H1 (cell line): ENCODE measurements at regions of chr14 and their contacts with region 1.

Region 1: DNA sequence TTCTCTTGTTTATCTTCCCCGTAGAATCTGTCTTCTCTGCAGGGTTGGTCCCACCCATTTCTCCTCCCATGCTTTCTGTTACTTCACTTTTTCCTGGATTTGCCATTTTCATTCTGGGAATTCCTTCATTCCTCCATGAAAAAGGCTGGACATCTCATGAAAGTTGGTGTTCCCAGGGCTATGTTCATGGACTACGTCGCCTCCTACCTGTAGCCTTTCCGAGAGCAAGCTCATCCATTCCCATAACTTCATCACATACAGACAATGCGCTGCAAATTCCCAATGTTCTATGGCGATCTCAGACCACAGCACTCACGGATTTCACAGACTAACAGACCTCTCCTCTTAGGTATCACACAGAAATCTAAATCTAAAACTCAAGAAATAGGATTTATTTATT is 217.1 kb downstream of the EXOC5 start:
- DNase-seq: no peak
- H3K4me3 ChIP-seq: no peak overlapping the region
- H3K27ac ChIP-seq: no peak overlapping the region
- H3K4me1 ChIP-seq: no peaks in the 10 kb centered on the region
- H3K27me3 ChIP-seq: peaks cover 0 to 3% (median 0%) of the 10 kb centered on the region in 4 experiments; a peak in 3 of 7 replicates
- CTCF ChIP-seq: peak; percentile 59 to 75 (median 61)
- EP300 ChIP-seq: no peak
- POLR2A ChIP-seq: no peak
- RAD21 ChIP-seq: peak; percentile 85

Region 2: DNA sequence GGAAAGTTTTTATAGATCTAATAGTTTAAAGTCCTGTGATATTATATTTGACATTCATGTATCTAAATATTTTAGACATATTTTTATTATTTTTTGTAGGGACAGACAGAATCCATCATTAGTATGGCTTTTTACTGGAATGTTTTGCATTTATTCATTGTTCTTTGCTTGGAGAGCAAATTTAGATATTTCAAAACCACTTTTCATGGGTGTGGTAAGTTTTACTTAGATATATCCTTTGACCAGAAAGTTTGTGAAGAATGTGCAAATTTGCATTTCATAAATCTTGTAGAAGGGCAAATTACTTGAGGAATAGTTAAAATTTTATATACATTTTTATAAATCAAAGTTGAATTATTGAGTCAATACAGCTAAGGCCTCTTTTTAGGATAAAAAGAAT is 434.5 kb before region 1 on chr14:
- CTCF ChIA-PET with region 1: no interaction called
- POLR2A ChIA-PET with region 1: no interaction called
- DNase-seq: no peak
- H3K4me3 ChIP-seq: no peak overlapping the region
- H3K27ac ChIP-seq: no peak overlapping the region
- H3K4me1 ChIP-seq: no peaks in the 10 kb centered on the region
- H3K27me3 ChIP-seq: peaks cover 0 to 1% (median 0%) of the 10 kb centered on the region in 4 experiments; a peak in 1 of 7 replicates
- CTCF ChIP-seq: no peak
- EP300 ChIP-seq: no peak
- POLR2A ChIP-seq: no peak
- RAD21 ChIP-seq: no peak

Region 3: GRCh38 chr14:56874375-56874774 is 177.3 kb before region 1 on chr14:
- CTCF ChIA-PET with region 1: interaction called, 12 read pairs
- POLR2A ChIA-PET with region 1: no interaction called
- DNase-seq: peak in 1 of 2 experiments; percentile 71
- H3K4me3 ChIP-seq: no peak overlapping the region
- H3K27ac ChIP-seq: no peak overlapping the region
- H3K4me1 ChIP-seq: peaks cover 0 to 5% (median 3%) of the 10 kb centered on the region in 4 experiments; a peak in 3 of 7 replicates
- H3K27me3 ChIP-seq: peaks cover 0 to 2% (median 0%) of the 10 kb centered on the region in 4 experiments; a peak in 2 of 7 replicates
- CTCF ChIP-seq: peak; percentile 66 to 88 (median 73)
- EP300 ChIP-seq: no peak
- POLR2A ChIP-seq: no peak
- RAD21 ChIP-seq: peak; percentile 80 to 83

Region 4: DNA sequence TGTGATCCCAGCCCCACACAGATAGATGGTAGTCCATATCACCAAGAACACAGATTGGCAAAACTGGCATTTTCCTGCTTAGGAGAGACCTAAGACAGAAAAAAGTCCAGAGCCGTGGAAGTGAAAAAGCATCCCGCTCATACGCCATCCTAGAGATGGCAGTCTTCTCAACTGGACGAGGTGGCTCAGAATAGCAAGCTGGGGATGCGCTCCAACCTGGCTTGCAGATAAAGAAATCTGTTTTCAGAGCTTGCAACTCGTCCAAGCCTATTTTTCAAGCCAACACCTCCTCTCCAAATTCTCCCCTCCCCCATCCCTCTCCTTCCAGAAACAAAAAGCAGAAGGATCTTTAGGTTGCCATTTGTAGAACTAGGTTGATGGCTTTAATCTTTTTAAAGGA is 167.0 kb before region 1 on chr14:
- CTCF ChIA-PET with region 1: interaction called, 13 read pairs
- POLR2A ChIA-PET with region 1: no interaction called
- DNase-seq: no peak
- H3K4me3 ChIP-seq: no peak overlapping the region
- H3K27ac ChIP-seq: no peak overlapping the region
- H3K4me1 ChIP-seq: peaks cover 0 to 23% (median 13%) of the 10 kb centered on the region in 4 experiments; a peak in 3 of 7 replicates
- H3K27me3 ChIP-seq: no peaks in the 10 kb centered on the region; a peak in 1 of 7 replicates
- CTCF ChIP-seq: peak; percentile 3 to 37 (median 23); a peak in 3 of 4 replicates
- EP300 ChIP-seq: no peak
- POLR2A ChIP-seq: no peak
- RAD21 ChIP-seq: peak; percentile 41 to 58

Region 5: DNA sequence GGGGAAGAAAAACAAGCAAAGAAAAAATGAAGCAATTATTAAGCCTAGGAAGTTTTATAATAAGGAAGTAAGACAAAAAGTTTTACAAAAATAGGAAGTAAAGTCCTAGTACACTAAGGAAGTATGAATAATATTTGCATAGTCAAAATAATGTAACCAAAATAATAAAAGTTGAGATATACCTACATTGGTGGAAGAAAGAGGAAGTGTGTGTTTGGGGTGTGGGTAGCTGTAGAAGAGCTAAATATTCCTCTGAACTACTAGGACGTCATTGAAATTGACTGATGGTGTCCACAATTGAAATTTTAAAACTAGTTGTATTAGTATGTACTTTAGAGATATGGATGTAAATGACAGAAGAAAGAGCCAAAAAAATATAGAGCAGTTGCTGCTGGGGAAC is 12.9 kb before region 1 on chr14:
- CTCF ChIA-PET with region 1: interaction called, 13 read pairs
- POLR2A ChIA-PET with region 1: no interaction called
- DNase-seq: no peak
- H3K4me3 ChIP-seq: no peak overlapping the region
- H3K27ac ChIP-seq: no peak overlapping the region
- H3K4me1 ChIP-seq: no peaks in the 10 kb centered on the region
- H3K27me3 ChIP-seq: no peaks in the 10 kb centered on the region
- CTCF ChIP-seq: no peak
- EP300 ChIP-seq: no peak
- POLR2A ChIP-seq: no peak
- RAD21 ChIP-seq: no peak